ENCODE measurements at regions of chr1 and their contacts with region 1.

Region 1: GRCh38 chr1:22704440-22705067 is 6.1 kb upstream of the EPHB2 start:
- DNase-seq: peak; percentile 75 to 88
- ATAC-seq: peak; percentile 77 to 98
- H3K4me3 ChIP-seq: no peak overlapping the region
- H3K27ac ChIP-seq: peak overlapping the region in 1 of 2 experiments; percentile 63; a peak in 2 of 6 replicates
- H3K4me1 ChIP-seq: 0 out of 3 replicates have a peak, but pooled peaks cover 1% of the 10 kb centered on the region
- CTCF ChIP-seq: peak; percentile 73
- EP300 ChIP-seq: no peak
- POLR2A ChIP-seq: no peak
- RAD21 ChIP-seq: peak; percentile 77 to 86

Region 2: DNA sequence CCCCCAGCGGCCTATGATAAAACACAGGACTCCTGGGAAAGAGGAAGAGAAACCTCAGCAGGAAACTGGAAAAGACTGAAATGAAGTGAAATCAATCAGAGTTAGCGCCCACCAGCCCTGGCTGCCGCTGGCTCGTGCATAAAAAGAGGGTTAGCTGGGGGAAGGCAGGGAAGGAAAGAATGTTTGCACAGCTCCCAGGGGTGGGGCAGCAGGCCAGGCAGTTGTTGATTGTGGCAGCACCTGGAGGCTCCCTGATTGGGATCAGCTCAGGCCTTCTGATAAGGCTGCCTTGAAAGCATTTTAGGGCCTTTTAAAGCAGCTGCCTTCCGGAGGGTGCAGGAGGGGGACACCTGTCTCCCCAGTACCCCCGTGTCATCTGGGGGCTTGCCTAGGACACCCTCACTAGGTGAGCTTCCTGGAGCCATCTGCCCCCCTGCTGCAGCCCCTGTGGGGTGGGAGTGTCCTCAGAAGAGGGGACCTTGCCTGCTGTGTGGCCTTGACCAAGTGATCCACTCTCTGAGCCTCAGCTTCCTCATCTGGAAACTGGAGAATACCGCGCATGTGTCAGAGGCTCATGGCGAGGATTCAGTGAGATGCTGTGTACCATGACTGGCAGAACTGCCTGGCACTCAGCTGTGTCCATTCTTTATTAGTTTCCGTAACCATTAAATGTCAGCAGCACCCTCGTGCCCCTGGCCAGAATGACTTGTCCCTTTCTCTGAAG is 12.6 kb after region 1 on chr1:
- CTCF ChIA-PET with region 1: interaction called, 43 read pairs
- POLR2A ChIA-PET with region 1: no interaction called
- DNase-seq: no peak
- ATAC-seq: peak; percentile 45 to 57; a peak in 4 of 6 replicates
- H3K4me3 ChIP-seq: no peak overlapping the region
- H3K27ac ChIP-seq: peak overlapping the region; percentile 31 to 73; a peak in 3 of 6 replicates
- H3K4me1 ChIP-seq: peaks cover 33% of the 10 kb centered on the region
- CTCF ChIP-seq: no peak
- EP300 ChIP-seq: no peak
- POLR2A ChIP-seq: no peak
- RAD21 ChIP-seq: no peak

Region 3: DNA sequence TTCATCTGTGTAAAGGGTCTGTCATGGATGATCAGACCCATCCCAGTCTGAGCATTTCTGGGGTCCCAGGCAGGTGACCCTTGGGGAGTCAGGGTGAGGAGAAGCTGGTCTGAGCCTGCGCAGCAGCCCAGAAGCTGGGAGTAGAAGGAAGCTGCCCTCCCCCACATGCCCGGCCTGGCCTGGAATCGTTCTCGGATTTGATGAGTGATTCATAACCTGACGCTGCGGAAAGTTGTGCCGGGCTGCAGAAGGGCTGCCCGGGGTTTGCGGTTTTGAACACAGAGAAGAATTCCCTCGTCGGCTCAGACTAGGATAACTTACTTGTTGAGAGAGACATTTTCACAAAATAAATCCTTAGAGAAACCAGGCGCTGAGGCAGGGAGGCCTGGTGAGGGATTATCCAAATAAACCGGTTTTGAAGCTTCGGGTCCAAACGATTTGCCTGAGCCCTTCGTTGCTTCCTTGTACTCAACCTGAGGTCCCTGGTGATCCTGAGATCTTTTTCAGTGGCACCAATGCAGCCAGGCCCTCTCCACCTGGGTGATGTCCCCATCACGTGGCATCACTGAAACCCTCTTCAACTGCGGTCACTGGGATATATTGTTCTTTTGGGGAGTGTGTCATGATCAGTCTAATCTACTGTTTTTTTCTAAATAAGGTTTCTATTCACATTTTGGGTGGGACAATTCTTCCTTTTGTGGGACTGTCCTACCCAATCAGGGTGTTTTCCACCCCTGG is 35.3 kb after region 1 on chr1:
- CTCF ChIA-PET with region 1: interaction called, 16 read pairs
- POLR2A ChIA-PET with region 1: no interaction called
- DNase-seq: peak; percentile 77 to 81
- ATAC-seq: peak; percentile 85 to 92
- H3K4me3 ChIP-seq: no peak overlapping the region
- H3K27ac ChIP-seq: peak overlapping the region; percentile 95 to 97
- H3K4me1 ChIP-seq: peaks cover 94% of the 10 kb centered on the region
- CTCF ChIP-seq: no peak
- EP300 ChIP-seq: peak in 1 of 2 experiments; percentile 26; a peak in 1 of 5 replicates
- POLR2A ChIP-seq: no peak
- RAD21 ChIP-seq: no peak

Region 4: GRCh38 chr1:22767852-22768251 is 63.3 kb after region 1 on chr1:
- CTCF ChIA-PET with region 1: interaction called, 17 read pairs
- POLR2A ChIA-PET with region 1: no interaction called
- DNase-seq: no peak
- ATAC-seq: no peak
- H3K4me3 ChIP-seq: no peak overlapping the region
- H3K27ac ChIP-seq: no peak overlapping the region
- H3K4me1 ChIP-seq: no peaks in the 10 kb centered on the region
- CTCF ChIP-seq: no peak
- EP300 ChIP-seq: no peak
- POLR2A ChIP-seq: no peak
- RAD21 ChIP-seq: no peak

Region 5: GRCh38 chr1:22782406-22782805 is 77.9 kb after region 1 on chr1:
- CTCF ChIA-PET with region 1: interaction called, 12 read pairs
- POLR2A ChIA-PET with region 1: no interaction called
- DNase-seq: no peak
- ATAC-seq: no peak
- H3K4me3 ChIP-seq: no peak overlapping the region
- H3K27ac ChIP-seq: no peak overlapping the region
- H3K4me1 ChIP-seq: 0 out of 3 replicates have a peak, but pooled peaks cover 3% of the 10 kb centered on the region
- CTCF ChIP-seq: no peak
- EP300 ChIP-seq: no peak
- POLR2A ChIP-seq: no peak
- RAD21 ChIP-seq: no peak

Region 6: DNA sequence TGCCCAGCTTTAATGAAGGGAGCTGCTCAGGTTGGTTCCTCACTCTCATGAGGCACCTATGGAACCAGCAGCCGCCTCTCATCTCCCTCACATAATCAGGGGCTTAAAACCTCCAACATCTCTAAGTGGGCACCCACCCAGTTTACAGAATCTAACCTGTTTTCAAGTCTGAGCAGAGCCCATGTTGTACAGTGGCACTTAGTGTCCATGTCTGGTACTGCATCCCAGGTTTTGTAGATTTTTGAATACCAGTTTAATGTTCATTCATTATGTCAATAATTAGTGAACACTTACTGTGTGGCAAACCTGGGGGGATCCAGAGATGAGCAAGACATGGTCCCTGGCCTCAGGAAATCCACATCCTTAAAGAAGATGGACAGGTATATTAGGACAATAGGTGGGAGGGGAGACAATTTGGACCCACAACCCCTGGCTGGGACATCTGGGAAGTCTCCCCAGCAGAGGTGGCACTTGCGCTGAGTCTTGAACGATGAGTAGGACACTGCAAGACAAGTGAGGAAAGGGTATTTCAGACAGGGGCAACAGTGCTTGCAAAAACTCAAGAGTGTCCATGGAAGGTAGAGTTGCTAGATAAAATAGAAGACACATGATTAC is 184.8 kb after region 1 on chr1:
- CTCF ChIA-PET with region 1: interaction called, 26 read pairs
- POLR2A ChIA-PET with region 1: no interaction called
- DNase-seq: peak; percentile 33 to 41
- ATAC-seq: peak; percentile 74 to 82; a peak in 4 of 6 replicates
- H3K4me3 ChIP-seq: no peak overlapping the region
- H3K27ac ChIP-seq: peak overlapping the region in 1 of 2 experiments; percentile 65; a peak in 2 of 6 replicates
- H3K4me1 ChIP-seq: no peaks in the 10 kb centered on the region
- CTCF ChIP-seq: peak; percentile 59
- EP300 ChIP-seq: no peak
- POLR2A ChIP-seq: no peak
- RAD21 ChIP-seq: peak; percentile 67 to 68

Region 7: GRCh38 chr1:22963044-22963677 is 258.6 kb after region 1 on chr1:
- CTCF ChIA-PET with region 1: interaction called, 24 read pairs
- POLR2A ChIA-PET with region 1: no interaction called
- DNase-seq: no peak
- ATAC-seq: no peak; a peak in 1 of 6 replicates
- H3K4me3 ChIP-seq: no peak overlapping the region
- H3K27ac ChIP-seq: no peak overlapping the region
- H3K4me1 ChIP-seq: no peaks in the 10 kb centered on the region
- CTCF ChIP-seq: no peak
- EP300 ChIP-seq: no peak
- POLR2A ChIP-seq: no peak
- RAD21 ChIP-seq: no peak